CD8-positive, alpha-beta T cell (primary cell): ENCODE measurements at regions of chr9 and their contacts with region 1.

Region 1: DNA sequence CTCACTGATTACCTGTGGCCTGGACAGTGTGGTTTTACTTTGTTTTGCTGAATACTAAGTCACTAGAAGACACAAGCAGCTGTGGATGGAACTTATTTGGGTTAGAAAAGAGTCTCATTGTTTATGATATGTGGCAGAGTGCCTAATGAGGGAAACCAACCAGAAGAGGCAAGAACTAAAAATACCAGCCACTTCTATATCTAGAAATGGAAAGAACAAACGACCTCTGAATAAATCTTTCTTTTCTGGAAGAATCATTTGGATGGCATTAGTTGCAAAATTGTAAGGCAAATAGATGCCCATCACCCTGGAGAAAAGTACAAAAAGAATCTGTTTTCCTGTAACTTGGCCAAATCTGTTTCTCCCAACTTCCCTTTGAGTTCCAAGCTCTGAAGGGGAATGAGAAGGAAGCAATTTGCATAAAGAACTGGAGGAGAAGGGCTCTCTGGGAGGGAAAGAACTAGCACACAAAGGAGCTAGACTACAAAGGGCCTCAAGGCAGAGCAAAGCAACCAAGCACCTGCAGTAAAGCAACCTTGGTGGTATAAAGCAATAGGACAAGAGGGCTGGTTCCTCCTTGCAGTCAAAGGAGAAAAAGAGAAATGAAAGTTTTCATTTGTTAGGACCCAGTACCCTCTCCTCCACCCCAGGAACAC is 455.4 kb downstream of the CAAP1 start:
- DNase-seq: no peak
- ATAC-seq: no peak
- H3K4me3 ChIP-seq: no peak overlapping the region
- H3K4me3 Mint-ChIP-seq: no peak overlapping the region
- H3K27ac ChIP-seq: no peak overlapping the region
- H3K27ac Mint-ChIP-seq: no peak overlapping the region
- H3K4me1 ChIP-seq: no peaks in the 10 kb centered on the region
- H3K4me1 Mint-ChIP-seq: no peaks in the 10 kb centered on the region
- H3K27me3 ChIP-seq: no peaks in the 10 kb centered on the region
- H3K27me3 Mint-ChIP-seq: no peaks in the 10 kb centered on the region
- CTCF ChIP-seq: no peak

Region 2: DNA sequence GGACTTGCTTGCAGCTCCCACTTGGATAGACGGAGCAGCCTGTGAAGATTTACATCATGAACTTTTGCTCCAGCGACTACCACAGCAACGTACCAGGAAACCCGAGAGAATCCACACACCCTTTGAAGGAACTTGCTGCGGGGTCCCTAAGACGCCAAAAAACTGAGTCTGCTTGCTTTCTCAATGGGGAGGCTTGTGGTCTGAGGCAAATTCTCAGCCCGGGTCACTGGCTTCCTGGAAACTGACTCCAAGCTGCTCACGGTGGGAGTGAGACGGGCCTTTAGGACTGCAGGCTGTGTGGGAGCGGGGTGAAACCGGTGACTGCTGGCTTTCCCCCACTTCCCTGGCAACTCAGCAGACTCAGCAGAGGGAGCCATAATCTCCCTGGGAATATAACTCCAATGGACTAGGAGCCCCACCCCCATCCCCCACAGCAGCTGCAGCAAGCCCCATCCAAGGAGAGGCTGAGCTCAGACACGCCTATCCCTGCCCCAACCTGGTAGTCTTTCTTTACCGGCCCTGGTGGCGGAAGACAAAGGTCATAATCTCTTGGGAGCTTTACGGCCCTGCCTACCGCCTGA is 10.5 kb before region 1 on chr9:
- CTCF ChIA-PET with region 1: no interaction called
- POLR2A ChIA-PET with region 1: no interaction called
- intact Hi-C with region 1: loop called in 1 of 2 experiments (anchors 1 kb)
- DNase-seq: no peak
- ATAC-seq: no peak
- H3K4me3 ChIP-seq: no peak overlapping the region
- H3K4me3 Mint-ChIP-seq: no peak overlapping the region
- H3K27ac ChIP-seq: no peak overlapping the region
- H3K27ac Mint-ChIP-seq: no peak overlapping the region
- H3K4me1 ChIP-seq: no peaks in the 10 kb centered on the region
- H3K4me1 Mint-ChIP-seq: no peaks in the 10 kb centered on the region
- H3K27me3 ChIP-seq: no peaks in the 10 kb centered on the region
- H3K27me3 Mint-ChIP-seq: no peaks in the 10 kb centered on the region
- CTCF ChIP-seq: no peak

Region 3: DNA sequence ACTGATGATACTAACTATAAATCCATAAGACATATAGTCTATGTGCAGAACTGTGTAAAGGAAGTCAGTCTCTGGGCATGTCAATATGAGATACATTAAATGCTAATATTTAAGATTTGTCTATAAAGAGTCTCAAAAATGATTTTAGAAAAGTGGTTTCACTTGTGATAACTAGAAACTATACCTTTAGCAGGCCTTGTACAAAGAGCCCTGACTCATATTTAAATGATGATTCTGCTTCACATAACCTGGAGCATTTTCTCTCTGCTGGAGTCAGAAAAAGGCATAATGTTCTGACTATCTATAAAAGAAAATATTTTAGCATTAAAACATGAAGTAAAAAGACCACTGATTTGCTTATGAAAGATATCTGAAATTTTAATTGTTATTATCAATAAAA is 1121.1 kb after region 1 on chr9:
- CTCF ChIA-PET with region 1: no interaction called
- POLR2A ChIA-PET with region 1: no interaction called
- intact Hi-C with region 1: no loop called
- DNase-seq: no peak
- ATAC-seq: no peak
- H3K4me3 ChIP-seq: no peak overlapping the region
- H3K4me3 Mint-ChIP-seq: no peak overlapping the region
- H3K27ac ChIP-seq: no peak overlapping the region
- H3K27ac Mint-ChIP-seq: no peak overlapping the region
- H3K4me1 ChIP-seq: no peaks in the 10 kb centered on the region
- H3K4me1 Mint-ChIP-seq: no peaks in the 10 kb centered on the region
- H3K27me3 ChIP-seq: no peaks in the 10 kb centered on the region
- H3K27me3 Mint-ChIP-seq: no peaks in the 10 kb centered on the region
- CTCF ChIP-seq: no peak